Naive thymus-derived CD4-positive, alpha-beta T cell (primary cell): ENCODE measurements at regions of chr11 and their contacts with region 1.

Region 1: GRCh38 chr11:63671322-63672155 is at the start of gene ATL3:
- DNase-seq: peak; percentile 82 to 92 (median 91)
- ATAC-seq: peak; percentile 98
- H3K4me3 ChIP-seq: peak within 1 kb of the TSS; percentile 97
- H3K4me3 Mint-ChIP-seq: peak within 1 kb of the TSS; percentile 76 to 90 (median 88)
- H3K27ac ChIP-seq: peak within 1 kb of the TSS; percentile 74
- H3K27ac Mint-ChIP-seq: peak within 1 kb of the TSS; percentile 68 to 91 (median 86)
- H3K4me1 ChIP-seq: peaks cover 4 to 6% of the 10 kb centered on the region in 2 donors
- H3K4me1 Mint-ChIP-seq: peaks cover 22 to 48% (median 27%) of the 10 kb centered on the region in 7 donors
- H3K27me3 ChIP-seq: no peaks in the 10 kb centered on the region
- H3K27me3 Mint-ChIP-seq: no peaks in the 10 kb centered on the region
- total RNA-seq, gene ATL3: 25.3 to 33.3 (median 29.5) TPM

Region 2: DNA sequence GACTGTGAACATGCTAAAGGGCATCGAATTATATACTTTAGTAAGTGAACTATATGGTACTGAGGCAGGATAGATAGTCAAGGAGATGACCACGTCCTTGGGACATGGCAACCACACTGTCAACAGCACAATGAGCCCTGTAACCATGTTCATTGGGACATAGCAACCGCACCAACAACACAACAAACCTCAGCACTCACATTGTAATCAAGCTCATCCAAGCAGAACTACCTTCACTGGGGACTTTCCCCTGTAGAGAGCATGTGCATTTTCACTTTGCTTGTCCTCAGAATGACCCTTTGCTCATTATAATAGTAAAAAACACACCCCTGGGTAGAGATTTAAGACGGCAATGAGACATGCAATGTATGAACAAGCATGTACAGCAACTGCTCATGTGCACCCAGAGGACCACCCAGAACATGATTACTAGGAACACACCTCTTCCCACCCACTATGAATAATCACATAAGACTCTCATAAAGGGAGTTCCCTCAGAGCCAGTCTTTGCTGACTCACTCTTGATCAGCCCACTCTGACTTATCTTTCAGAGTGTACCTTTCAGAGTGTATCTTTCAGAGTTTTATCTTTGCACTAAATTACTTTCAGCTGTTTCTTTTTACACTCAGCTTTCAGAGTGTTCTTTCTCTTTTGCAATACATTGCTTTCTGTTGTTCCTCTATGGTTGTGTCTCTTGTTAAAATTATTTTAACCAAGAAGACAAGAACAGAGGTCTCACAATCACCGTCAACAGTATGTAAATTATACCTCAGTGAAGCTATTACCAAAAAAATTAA is 104.3 kb before region 1 on chr11:
- CTCF ChIA-PET with region 1: no interaction called
- POLR2A ChIA-PET with region 1: no interaction called
- intact Hi-C with region 1: loop called in 1 of 2 experiments (anchors 10 kb)
- DNase-seq: peak in 8 of 9 donors; percentile 31 to 84 (median 62)
- ATAC-seq: peak; percentile 88
- H3K4me3 ChIP-seq: no peak overlapping the region
- H3K4me3 Mint-ChIP-seq: peak overlapping the region in 9 of 10 donors; percentile 7 to 62 (median 42)
- H3K27ac ChIP-seq: peak overlapping the region; percentile 44
- H3K27ac Mint-ChIP-seq: peak overlapping the region; percentile 56 to 94 (median 86)
- H3K4me1 ChIP-seq: peaks cover 22 to 25% of the 10 kb centered on the region in 2 donors
- H3K4me1 Mint-ChIP-seq: peaks cover 26 to 55% (median 47%) of the 10 kb centered on the region in 7 donors
- H3K27me3 ChIP-seq: no peaks in the 10 kb centered on the region
- H3K27me3 Mint-ChIP-seq: peaks cover 0 to 19% (median 0%) of the 10 kb centered on the region in 5 donors

Region 3: GRCh38 chr11:63687845-63688244 is 16.3 kb after region 1 on chr11:
- CTCF ChIA-PET with region 1: interaction called, 9 read pairs
- POLR2A ChIA-PET with region 1: interaction called, 42 read pairs
- intact Hi-C with region 1: loop called in 1 of 2 experiments (anchors 2 kb)
- DNase-seq: no peak
- ATAC-seq: no peak
- H3K4me3 ChIP-seq: no peak overlapping the region
- H3K4me3 Mint-ChIP-seq: no peak overlapping the region
- H3K27ac ChIP-seq: no peak overlapping the region
- H3K27ac Mint-ChIP-seq: no peak overlapping the region
- H3K4me1 ChIP-seq: peaks cover 0 to under 1% of the 10 kb centered on the region in 2 donors
- H3K4me1 Mint-ChIP-seq: peaks cover 17 to 36% (median 23%) of the 10 kb centered on the region in 7 donors
- H3K27me3 ChIP-seq: no peaks in the 10 kb centered on the region
- H3K27me3 Mint-ChIP-seq: no peaks in the 10 kb centered on the region

Region 4: GRCh38 chr11:63768237-63769043 is 96.9 kb after region 1 on chr11 and contains the start of gene ZFTA:
- CTCF ChIA-PET with region 1: interaction called, 4 read pairs
- POLR2A ChIA-PET with region 1: no interaction called
- intact Hi-C with region 1: loop called in 1 of 2 experiments (anchors 1 kb)
- DNase-seq: peak; percentile 34 to 79 (median 54)
- ATAC-seq: peak; percentile 84
- H3K4me3 ChIP-seq: peak within 1 kb of the TSS; percentile 77
- H3K4me3 Mint-ChIP-seq: peak within 1 kb of the TSS; percentile 87 to 99 (median 92)
- H3K27ac ChIP-seq: peak within 1 kb of the TSS; percentile 60
- H3K27ac Mint-ChIP-seq: peak within 1 kb of the TSS; percentile 34 to 94 (median 83)
- H3K4me1 ChIP-seq: peaks cover 6 to 9% of the 10 kb centered on the region in 2 donors
- H3K4me1 Mint-ChIP-seq: peaks cover 6 to 14% (median 8%) of the 10 kb centered on the region in 7 donors
- H3K27me3 ChIP-seq: peaks cover 0 to 9% of the 10 kb centered on the region in 2 donors
- H3K27me3 Mint-ChIP-seq: peaks cover 0 to 35% (median 9%) of the 10 kb centered on the region in 5 donors
- total RNA-seq, gene ZFTA: 2.1 to 3.6 (median 2.7) TPM

Region 5: GRCh38 chr11:63901660-63902059 is 230.1 kb after region 1 on chr11:
- CTCF ChIA-PET with region 1: no interaction called
- POLR2A ChIA-PET with region 1: no interaction called
- intact Hi-C with region 1: no loop called
- DNase-seq: no peak
- ATAC-seq: no peak
- H3K4me3 ChIP-seq: no peak overlapping the region
- H3K4me3 Mint-ChIP-seq: no peak overlapping the region
- H3K27ac ChIP-seq: no peak overlapping the region
- H3K27ac Mint-ChIP-seq: peak overlapping the region in 2 of 9 donors; percentile 31 to 51
- H3K4me1 ChIP-seq: peaks cover 0 to under 1% of the 10 kb centered on the region in 2 donors
- H3K4me1 Mint-ChIP-seq: peaks cover under 1 to 16% (median 10%) of the 10 kb centered on the region in 7 donors
- H3K27me3 ChIP-seq: no peaks in the 10 kb centered on the region
- H3K27me3 Mint-ChIP-seq: no peaks in the 10 kb centered on the region

Region 6: GRCh38 chr11:63974259-63975143 is 303.0 kb after region 1 on chr11 and contains the start of gene COX8A:
- CTCF ChIA-PET with region 1: no interaction called
- POLR2A ChIA-PET with region 1: no interaction called
- intact Hi-C with region 1: loop called in 1 of 2 experiments (anchors 1 kb)
- DNase-seq: peak; percentile 65 to 97 (median 94)
- ATAC-seq: peak; percentile 99
- H3K4me3 ChIP-seq: peak within 1 kb of the TSS; percentile 87
- H3K4me3 Mint-ChIP-seq: peak within 1 kb of the TSS; percentile 98 to 100 (median 99)
- H3K27ac ChIP-seq: peak within 1 kb of the TSS; percentile 94
- H3K27ac Mint-ChIP-seq: peak within 1 kb of the TSS; percentile 94 to 99 (median 99)
- H3K4me1 ChIP-seq: peaks cover 10 to 11% of the 10 kb centered on the region in 2 donors
- H3K4me1 Mint-ChIP-seq: peaks cover 12 to 36% (median 29%) of the 10 kb centered on the region in 7 donors
- H3K27me3 ChIP-seq: no peaks in the 10 kb centered on the region
- H3K27me3 Mint-ChIP-seq: peaks cover 0 to 2% (median 0%) of the 10 kb centered on the region in 5 donors
- total RNA-seq, gene COX8A: 90.9 to 363 (median 105) TPM

Region 7: GRCh38 chr11:64185816-64186498 is 514.4 kb after region 1 on chr11 and contains the start of gene STIP1:
- CTCF ChIA-PET with region 1: no interaction called
- POLR2A ChIA-PET with region 1: no interaction called
- intact Hi-C with region 1: loop called in 1 of 2 experiments (anchors 2 kb)
- DNase-seq: peak; percentile 87 to 100 (median 99)
- ATAC-seq: peak; percentile 92
- H3K4me3 ChIP-seq: peak within 1 kb of the TSS; percentile 84
- H3K4me3 Mint-ChIP-seq: peak within 1 kb of the TSS in 9 of 10 donors; percentile 88 to 99 (median 96)
- H3K27ac ChIP-seq: peak within 1 kb of the TSS; percentile 82
- H3K27ac Mint-ChIP-seq: peak within 1 kb of the TSS in 7 of 9 donors; percentile 89 to 99 (median 92)
- H3K4me1 ChIP-seq: peaks cover 11 to 28% of the 10 kb centered on the region in 2 donors
- H3K4me1 Mint-ChIP-seq: peaks cover 19 to 58% (median 46%) of the 10 kb centered on the region in 7 donors
- H3K27me3 ChIP-seq: no peaks in the 10 kb centered on the region
- H3K27me3 Mint-ChIP-seq: peaks cover 0 to 6% (median 0%) of the 10 kb centered on the region in 5 donors
- total RNA-seq, gene STIP1: 45.1 to 243 (median 88.8) TPM